A673 (cell line): ENCODE measurements at regions of chr13 and their contacts with region 1.

Region 1: GRCh38 chr13:41352935-41353840 is 42.1 kb downstream of the NAA16 start:
- DNase-seq: peak; percentile 56
- H3K4me3 ChIP-seq: no peak overlapping the region
- H3K27ac ChIP-seq: no peak overlapping the region
- H3K4me1 ChIP-seq: no peaks in the 10 kb centered on the region
- H3K27me3 ChIP-seq: no peaks in the 10 kb centered on the region
- CTCF ChIP-seq: peak; percentile 83

Region 2: GRCh38 chr13:41178040-41178439 is 175.1 kb before region 1 on chr13:
- CTCF ChIA-PET with region 1: no interaction called
- POLR2A ChIA-PET with region 1: no interaction called
- intact Hi-C with region 1: loop called (anchors 5 kb)
- DNase-seq: no peak
- H3K4me3 ChIP-seq: no peak overlapping the region
- H3K27ac ChIP-seq: no peak overlapping the region
- H3K4me1 ChIP-seq: no peaks in the 10 kb centered on the region
- H3K27me3 ChIP-seq: no peaks in the 10 kb centered on the region
- CTCF ChIP-seq: no peak

Region 3: DNA sequence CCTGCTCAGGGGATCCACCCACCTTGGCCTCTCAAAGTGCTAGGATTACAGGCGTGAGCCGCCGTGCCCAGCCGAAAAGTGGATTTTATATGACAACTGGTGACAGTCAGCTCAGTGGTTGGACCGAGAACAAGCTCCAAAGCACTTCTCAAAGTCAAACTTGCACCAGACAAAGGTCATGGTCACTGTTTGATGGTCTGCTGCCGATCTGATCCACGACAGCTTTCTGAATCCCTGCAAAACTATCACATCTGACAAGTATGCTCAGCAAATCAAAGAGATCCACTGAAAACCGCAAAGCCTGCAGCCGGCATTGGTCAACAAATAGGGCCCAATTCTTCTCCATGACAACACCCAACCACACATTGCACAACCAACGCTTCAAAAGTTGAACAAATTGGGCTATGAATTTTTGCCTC is 63.7 kb before region 1 on chr13:
- CTCF ChIA-PET with region 1: no interaction called
- POLR2A ChIA-PET with region 1: no interaction called
- intact Hi-C with region 1: no loop called
- DNase-seq: no peak
- H3K4me3 ChIP-seq: no peak overlapping the region
- H3K27ac ChIP-seq: no peak overlapping the region
- H3K4me1 ChIP-seq: no peaks in the 10 kb centered on the region
- H3K27me3 ChIP-seq: peaks cover 3% of the 10 kb centered on the region
- CTCF ChIP-seq: no peak

Region 4: GRCh38 chr13:41588899-41589298 is 235.7 kb after region 1 on chr13:
- CTCF ChIA-PET with region 1: no interaction called
- POLR2A ChIA-PET with region 1: no interaction called
- intact Hi-C with region 1: no loop called
- DNase-seq: peak; percentile 21
- H3K4me3 ChIP-seq: no peak overlapping the region
- H3K27ac ChIP-seq: no peak overlapping the region
- H3K4me1 ChIP-seq: peaks cover 5% of the 10 kb centered on the region
- H3K27me3 ChIP-seq: no peaks in the 10 kb centered on the region
- CTCF ChIP-seq: no peak

Region 5: DNA sequence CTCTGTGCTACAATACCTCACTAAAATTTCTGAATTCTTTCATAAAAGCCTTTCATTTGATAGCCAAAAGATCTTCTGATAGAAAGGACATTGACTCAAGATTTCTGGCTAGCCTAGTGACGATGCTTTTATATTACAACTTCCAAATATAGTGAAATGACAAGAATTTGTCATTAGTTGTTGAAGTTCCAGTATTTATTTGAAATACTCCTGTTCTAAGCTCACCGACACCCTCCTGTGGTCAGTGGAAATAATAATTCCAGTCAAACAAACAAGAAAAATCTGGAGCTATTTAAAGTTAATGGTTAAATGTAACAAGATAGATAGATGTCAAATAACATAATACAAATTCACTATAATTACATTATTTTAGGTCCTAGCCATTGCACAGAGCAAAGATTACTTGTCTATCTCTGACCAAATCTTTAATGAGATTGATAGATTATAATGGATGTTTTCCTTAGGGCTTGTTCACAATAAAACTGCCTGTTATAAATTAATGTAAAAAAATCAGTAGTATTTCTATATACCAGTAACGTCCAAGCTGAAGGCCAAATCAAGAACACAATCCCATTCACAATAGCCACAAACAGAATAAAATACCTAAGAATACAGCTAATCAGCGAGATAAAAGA is 299.7 kb after region 1 on chr13:
- CTCF ChIA-PET with region 1: no interaction called
- POLR2A ChIA-PET with region 1: no interaction called
- intact Hi-C with region 1: loop called (anchors 10 kb)
- DNase-seq: peak; percentile 52
- H3K4me3 ChIP-seq: no peak overlapping the region
- H3K27ac ChIP-seq: no peak overlapping the region
- H3K4me1 ChIP-seq: no peaks in the 10 kb centered on the region
- H3K27me3 ChIP-seq: no peaks in the 10 kb centered on the region
- CTCF ChIP-seq: peak; percentile 68